ENCODE measurements at regions of chr3 and their contacts with region 1.

Region 1: GRCh38 chr3:30042274-30042859 is 564.0 kb upstream of the TGFBR2 start:
- DNase-seq: peak; percentile 30 to 48
- H3K4me3 ChIP-seq: no peak overlapping the region
- H3K27ac ChIP-seq: no peak overlapping the region
- H3K4me1 ChIP-seq: no peaks in the 10 kb centered on the region
- H3K27me3 ChIP-seq: no peaks in the 10 kb centered on the region
- CTCF ChIP-seq: peak; percentile 72

Region 2: GRCh38 chr3:30112902-30113484 is 70.6 kb after region 1 on chr3:
- CTCF ChIA-PET with region 1: no interaction called
- POLR2A ChIA-PET with region 1: no interaction called
- intact Hi-C with region 1: loop called (anchors 2 kb)
- DNase-seq: no peak
- H3K4me3 ChIP-seq: no peak overlapping the region
- H3K27ac ChIP-seq: no peak overlapping the region
- H3K4me1 ChIP-seq: no peaks in the 10 kb centered on the region
- H3K27me3 ChIP-seq: no peaks in the 10 kb centered on the region
- CTCF ChIP-seq: peak; percentile 71

Region 3: DNA sequence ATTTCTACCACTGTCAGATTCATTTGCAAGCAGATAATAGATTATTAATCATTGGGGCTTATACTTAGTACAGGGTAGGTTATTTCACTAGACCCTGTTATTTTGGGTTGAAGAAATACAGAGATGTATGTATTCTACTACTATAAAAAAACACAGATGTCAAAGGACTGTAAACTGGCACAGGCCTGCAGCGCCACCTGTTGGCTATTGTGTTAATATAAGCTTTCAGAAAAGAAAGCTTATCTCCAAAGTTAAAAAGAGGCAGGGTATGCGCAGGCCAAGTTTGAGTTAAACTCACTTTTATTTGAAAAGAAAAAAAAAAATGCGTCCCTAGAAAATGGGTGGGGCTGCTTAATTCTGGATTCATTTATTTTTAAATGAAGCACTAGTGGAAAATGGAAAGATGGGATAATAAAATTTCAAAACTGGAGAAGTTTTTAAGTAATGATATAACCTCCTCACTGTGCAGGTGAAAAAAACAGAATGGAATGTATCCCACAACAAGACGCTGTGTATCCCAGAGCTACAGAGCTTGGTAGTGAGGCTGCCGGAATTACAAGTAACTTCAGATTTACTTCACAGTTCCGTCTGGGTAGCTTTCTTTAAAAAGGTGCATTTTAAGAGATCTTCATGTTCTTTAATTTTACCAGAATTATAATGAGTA is 156.9 kb after region 1 on chr3:
- CTCF ChIA-PET with region 1: interaction called, 8 read pairs
- POLR2A ChIA-PET with region 1: no interaction called
- intact Hi-C with region 1: loop called (anchors 1 kb)
- DNase-seq: peak in 1 of 2 experiments; percentile 30
- H3K4me3 ChIP-seq: no peak overlapping the region
- H3K27ac ChIP-seq: no peak overlapping the region
- H3K4me1 ChIP-seq: no peaks in the 10 kb centered on the region
- H3K27me3 ChIP-seq: no peaks in the 10 kb centered on the region
- CTCF ChIP-seq: peak; percentile 78

Region 4: DNA sequence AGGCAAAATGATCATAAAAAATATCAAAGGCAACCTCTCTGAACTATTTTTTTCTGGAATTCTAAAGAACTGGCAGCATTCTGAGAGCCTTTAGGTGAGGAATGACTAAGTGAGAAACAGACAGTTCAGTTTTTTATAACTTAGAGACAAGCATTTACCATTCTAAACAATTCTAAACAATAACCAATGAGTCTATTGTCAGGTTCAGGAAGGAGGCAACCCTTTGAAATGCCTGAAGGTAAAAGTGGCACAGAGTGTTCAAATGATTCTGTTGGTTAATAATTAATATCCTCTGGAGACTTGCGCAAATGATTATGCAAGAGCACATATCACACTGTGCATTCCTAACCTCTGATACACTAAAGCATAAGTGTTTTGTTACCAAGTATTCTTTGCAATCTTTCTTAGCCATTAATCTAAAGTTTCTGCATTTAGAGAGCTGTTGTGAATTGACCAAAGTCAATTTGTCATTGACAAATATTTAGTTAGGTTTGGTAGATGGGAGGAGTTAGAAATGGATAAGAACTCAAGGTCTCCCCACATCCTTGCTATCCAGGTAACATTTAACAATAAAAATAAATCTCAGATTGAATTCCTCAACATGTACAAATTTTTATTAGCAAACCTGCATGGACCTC is 554.9 kb after region 1 on chr3:
- CTCF ChIA-PET with region 1: interaction called, 15 read pairs
- POLR2A ChIA-PET with region 1: no interaction called
- intact Hi-C with region 1: no loop called
- DNase-seq: peak; percentile 47 to 94
- H3K4me3 ChIP-seq: no peak overlapping the region
- H3K27ac ChIP-seq: peak overlapping the region; percentile 80
- H3K4me1 ChIP-seq: peaks cover 23% of the 10 kb centered on the region
- H3K27me3 ChIP-seq: no peaks in the 10 kb centered on the region
- CTCF ChIP-seq: no peak

Region 5: DNA sequence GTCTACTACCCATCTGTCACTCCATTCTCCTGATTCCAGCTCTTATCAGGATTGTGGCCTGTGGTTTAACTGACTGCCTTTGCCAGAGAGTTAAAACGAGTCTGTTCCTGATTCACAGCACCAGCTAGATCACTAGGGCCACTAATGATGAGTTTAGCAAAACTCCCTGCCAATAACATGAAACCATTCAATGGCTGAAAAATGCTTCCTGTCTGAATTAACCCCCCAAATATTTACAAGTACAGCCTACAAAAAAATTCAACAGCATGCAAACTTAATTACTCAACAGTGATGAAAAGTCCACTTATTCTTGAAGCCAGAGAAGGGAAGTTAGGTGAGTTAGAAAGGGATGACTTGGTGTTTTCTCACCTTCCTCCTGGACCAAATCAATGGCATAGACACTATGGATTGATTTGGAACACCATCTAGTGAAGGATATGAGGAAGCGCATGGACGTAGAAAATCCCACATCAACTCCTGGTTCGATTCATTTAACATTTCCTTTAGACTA is 705.5 kb after region 1 on chr3:
- CTCF ChIA-PET with region 1: interaction called, 3 read pairs
- POLR2A ChIA-PET with region 1: no interaction called
- intact Hi-C with region 1: loop called (anchors 2 kb)
- DNase-seq: peak in 1 of 2 experiments; percentile 57
- H3K4me3 ChIP-seq: no peak overlapping the region
- H3K27ac ChIP-seq: no peak overlapping the region
- H3K4me1 ChIP-seq: peaks cover 8% of the 10 kb centered on the region; the same call in 1 of the 2 replicates
- H3K27me3 ChIP-seq: no peaks in the 10 kb centered on the region
- CTCF ChIP-seq: peak; percentile 32; the same call in 1 of the 2 replicates

Region 6: DNA sequence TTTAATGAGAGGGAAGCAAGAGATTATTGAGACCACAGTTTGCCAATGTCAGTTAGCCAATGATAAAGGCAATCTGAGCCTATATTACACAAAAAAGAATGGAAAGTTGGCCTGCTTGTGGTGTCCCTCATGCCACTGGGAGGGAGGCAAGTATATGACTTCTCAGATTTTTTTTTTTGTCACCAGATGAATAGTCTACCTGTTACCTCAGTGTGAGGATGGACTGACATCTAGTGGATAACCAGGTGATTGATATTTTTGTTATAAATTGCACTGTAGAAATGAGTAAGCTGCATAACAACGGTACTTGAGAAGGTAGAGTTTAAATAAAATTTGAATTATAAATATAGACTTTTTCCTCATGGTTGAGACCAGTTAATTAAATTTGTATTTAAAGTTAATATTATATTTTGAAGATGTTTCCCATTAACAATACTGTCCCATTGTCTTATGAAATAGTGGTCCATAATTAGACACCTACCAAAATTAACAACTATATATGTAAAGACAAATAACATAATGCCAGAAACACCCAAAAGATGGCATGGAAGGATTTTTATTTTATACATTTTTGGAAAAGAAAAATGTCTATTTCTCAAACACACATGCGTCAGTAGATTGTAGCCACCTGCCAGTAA is 1089.9 kb after region 1 on chr3:
- CTCF ChIA-PET with region 1: no interaction called
- POLR2A ChIA-PET with region 1: no interaction called
- intact Hi-C with region 1: loop called (anchors 5 kb)
- DNase-seq: peak in 1 of 2 experiments; percentile 36
- H3K4me3 ChIP-seq: no peak overlapping the region
- H3K27ac ChIP-seq: no peak overlapping the region
- H3K4me1 ChIP-seq: no peaks in the 10 kb centered on the region
- H3K27me3 ChIP-seq: no peaks in the 10 kb centered on the region
- CTCF ChIP-seq: peak; percentile 66

Measured in PC-9 (cell line).